Mammary epithelial cell (primary cell): ENCODE measurements at regions of chr11 and their contacts with region 1.

Region 1: DNA sequence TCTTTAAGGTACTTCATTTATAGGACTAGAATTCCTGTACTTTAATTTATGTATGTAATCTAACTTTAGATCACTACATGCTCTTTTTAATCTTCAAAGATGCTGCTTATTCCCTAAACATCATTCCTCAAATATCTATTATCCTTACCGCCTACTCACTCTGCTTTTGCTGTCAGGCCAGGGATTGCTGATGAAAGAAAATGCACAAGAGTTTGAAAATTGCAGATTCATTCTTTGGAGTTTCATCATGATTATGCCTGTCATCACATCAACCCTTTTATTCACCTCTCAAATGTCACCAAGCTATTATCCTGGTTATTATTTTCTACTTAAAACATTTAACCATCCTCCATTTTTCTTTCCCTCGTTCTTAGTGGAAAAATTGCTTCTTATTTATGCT is 802.7 kb downstream of the METTL15 start:
- DNase-seq: no peak
- H3K4me3 ChIP-seq: no peak overlapping the region
- H3K27ac ChIP-seq: no peak overlapping the region
- H3K4me1 ChIP-seq: no peaks in the 10 kb centered on the region
- H3K27me3 ChIP-seq: no peaks in the 10 kb centered on the region
- CTCF ChIP-seq: no peak

Region 2: GRCh38 chr11:28168718-28169117 is 742.2 kb before region 1 on chr11:
- CTCF ChIA-PET with region 1: no interaction called
- dilution Hi-C with region 1: no loop called
- in situ Hi-C with region 1: no loop called
- intact Hi-C with region 1: loop called (anchors 5 kb)
- DNase-seq: no peak
- H3K4me3 ChIP-seq: no peak overlapping the region
- H3K27ac ChIP-seq: no peak overlapping the region
- H3K4me1 ChIP-seq: no peaks in the 10 kb centered on the region
- H3K27me3 ChIP-seq: no peaks in the 10 kb centered on the region
- CTCF ChIP-seq: no peak

Region 3: DNA sequence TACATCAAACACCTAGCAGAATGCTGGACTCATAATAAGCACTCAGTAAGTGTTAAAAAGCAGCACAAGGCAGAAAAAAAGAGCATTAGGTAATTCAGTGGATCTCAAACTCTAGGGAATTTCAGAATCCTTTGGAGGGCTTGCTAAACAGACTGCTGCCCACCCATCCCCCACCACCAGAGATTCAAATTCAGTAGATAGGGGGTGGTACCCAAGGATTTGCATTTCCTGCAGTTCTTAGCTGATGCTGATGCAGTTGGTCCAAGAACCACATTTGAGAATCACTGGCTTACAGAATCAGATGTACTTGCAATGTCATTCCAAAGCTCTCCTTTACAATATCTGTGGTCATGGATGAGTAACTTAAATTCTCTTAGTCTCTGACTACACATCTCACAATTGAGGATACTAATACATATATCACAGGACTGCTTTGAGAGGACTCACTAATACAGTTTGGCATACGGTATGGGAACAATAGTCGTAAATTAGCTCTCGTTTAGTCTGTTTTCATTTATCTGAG is 441.4 kb after region 1 on chr11:
- CTCF ChIA-PET with region 1: no interaction called
- dilution Hi-C with region 1: no loop called
- in situ Hi-C with region 1: no loop called
- intact Hi-C with region 1: no loop called
- DNase-seq: no peak
- H3K4me3 ChIP-seq: no peak overlapping the region
- H3K27ac ChIP-seq: no peak overlapping the region
- H3K4me1 ChIP-seq: no peaks in the 10 kb centered on the region
- H3K27me3 ChIP-seq: no peaks in the 10 kb centered on the region
- CTCF ChIP-seq: no peak